Colonic mucosa (tissue), 4 donors: ENCODE measurements at regions of chr4 and their contacts with region 1.

Region 1: DNA sequence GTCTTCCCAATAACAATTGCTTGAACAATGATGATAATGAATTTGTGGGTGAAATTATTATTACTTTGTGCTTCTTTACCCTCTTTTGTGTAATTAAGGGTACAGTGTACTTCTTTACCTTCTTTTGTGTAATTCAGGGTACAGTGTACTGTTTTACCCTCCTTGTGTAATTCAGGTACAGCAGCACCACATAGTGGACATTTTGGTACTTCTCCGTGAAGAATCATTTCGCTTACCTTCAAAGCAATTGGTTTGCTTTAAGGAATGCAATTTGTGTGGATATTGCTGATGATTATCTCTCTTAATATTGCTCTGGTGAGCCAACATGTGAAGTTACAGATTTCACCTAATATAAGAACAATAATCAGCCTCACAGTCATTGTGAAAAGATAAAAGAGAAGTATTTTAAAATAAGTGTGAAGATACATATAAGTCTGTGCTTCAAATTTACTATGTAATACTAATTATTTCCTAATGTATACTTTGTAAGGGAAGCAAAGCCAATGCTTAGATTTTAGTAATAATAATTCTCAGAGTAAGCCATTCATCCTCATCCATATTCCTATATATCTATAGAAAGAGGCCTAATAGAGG is 27.2 kb upstream of the SEC24B start:
- DNase-seq: peak; percentile 27
- H3K4me3 ChIP-seq: no peak overlapping the region
- H3K27ac ChIP-seq: no peak overlapping the region
- H3K4me1 ChIP-seq: no peaks in the 10 kb centered on the region
- H3K27me3 ChIP-seq: no peaks in the 10 kb centered on the region
- CTCF ChIP-seq: peak; percentile 38

Region 2: DNA sequence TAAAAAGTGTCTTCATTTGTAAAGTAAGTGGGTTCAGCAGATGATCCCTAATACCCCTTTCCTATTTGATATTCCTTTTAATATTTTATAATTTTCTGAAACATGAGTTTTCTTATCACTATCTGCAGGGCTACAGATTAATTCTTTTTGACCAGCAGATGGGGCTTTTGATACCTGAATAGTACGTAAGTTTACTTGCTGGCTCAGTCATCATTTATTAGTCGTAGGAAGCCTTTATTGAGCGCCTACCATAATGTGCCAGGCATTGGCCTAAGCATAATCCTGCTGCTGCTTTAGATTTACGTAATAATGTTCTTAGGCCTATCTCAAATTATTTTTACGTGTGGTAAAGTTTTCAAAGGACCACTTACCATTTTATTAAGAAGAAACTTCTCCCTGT is 723.0 kb before region 1 on chr4:
- intact Hi-C with region 1: loop called (anchors 10 kb)
- DNase-seq: no peak
- H3K4me3 ChIP-seq: no peak overlapping the region
- H3K27ac ChIP-seq: no peak overlapping the region
- H3K4me1 ChIP-seq: no peaks in the 10 kb centered on the region
- H3K27me3 ChIP-seq: no peaks in the 10 kb centered on the region
- CTCF ChIP-seq: no peak